Mammary epithelial cell (primary cell): ENCODE measurements at regions of chr3 and their contacts with region 1.

Region 1: DNA sequence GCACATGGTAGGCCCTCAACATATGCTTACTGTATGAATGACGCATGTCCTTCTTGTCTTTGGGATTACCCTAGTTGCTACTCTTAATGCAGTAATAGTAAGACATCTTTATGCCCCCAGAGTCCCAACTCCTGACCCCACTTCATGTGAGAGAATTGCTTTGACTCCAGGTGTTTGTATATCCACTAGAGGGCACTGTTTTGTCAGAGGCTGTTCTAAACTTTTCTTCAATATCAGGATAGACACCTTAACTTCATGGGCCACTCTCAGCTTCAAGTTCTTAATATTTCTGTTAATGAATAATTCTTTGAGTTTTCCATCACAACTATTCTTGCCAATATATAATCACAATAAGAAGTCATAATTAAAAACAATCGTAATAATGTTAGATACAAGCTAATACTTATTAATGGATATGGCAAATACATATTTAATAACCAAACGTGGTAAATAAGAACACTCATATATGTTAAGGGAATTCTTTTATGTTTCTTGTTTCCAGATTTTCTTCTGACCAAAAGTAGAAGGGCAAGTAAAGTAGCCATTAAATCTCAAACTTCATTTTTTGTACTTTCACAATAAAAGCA is 337.2 kb upstream of the DNAJC19 start:
- DNase-seq: peak; percentile 6
- H3K4me3 ChIP-seq: no peak overlapping the region
- H3K27ac ChIP-seq: no peak overlapping the region
- H3K4me1 ChIP-seq: no peaks in the 10 kb centered on the region
- H3K27me3 ChIP-seq: no peaks in the 10 kb centered on the region
- CTCF ChIP-seq: peak; percentile 67 to 80

Region 2: DNA sequence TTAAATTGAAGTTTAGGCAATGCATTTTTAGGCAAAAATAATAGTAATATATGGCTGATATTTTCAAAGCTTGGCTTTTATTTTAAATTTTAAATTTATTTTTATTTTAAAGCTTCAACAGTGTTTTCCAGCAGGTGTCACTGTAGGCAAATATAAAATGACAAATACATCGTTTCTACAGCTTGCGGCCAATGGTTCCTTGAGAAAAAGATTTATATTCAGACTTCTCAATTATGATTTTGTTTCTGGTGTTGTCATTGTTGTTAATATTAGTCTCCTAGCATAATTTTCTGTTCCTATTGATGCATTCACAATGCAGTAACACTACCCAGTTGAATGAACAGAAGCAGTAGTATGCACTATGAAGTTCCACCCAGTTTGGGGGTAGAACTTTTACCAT is 116.5 kb before region 1 on chr3:
- CTCF ChIA-PET with region 1: interaction called, 4 read pairs
- dilution Hi-C with region 1: no loop called
- in situ Hi-C with region 1: no loop called
- intact Hi-C with region 1: loop called (anchors 1 kb)
- DNase-seq: peak; percentile 2
- H3K4me3 ChIP-seq: no peak overlapping the region
- H3K27ac ChIP-seq: no peak overlapping the region
- H3K4me1 ChIP-seq: no peaks in the 10 kb centered on the region
- H3K27me3 ChIP-seq: peaks cover 6% of the 10 kb centered on the region
- CTCF ChIP-seq: peak in 1 of 2 donors; percentile 35

Region 3: DNA sequence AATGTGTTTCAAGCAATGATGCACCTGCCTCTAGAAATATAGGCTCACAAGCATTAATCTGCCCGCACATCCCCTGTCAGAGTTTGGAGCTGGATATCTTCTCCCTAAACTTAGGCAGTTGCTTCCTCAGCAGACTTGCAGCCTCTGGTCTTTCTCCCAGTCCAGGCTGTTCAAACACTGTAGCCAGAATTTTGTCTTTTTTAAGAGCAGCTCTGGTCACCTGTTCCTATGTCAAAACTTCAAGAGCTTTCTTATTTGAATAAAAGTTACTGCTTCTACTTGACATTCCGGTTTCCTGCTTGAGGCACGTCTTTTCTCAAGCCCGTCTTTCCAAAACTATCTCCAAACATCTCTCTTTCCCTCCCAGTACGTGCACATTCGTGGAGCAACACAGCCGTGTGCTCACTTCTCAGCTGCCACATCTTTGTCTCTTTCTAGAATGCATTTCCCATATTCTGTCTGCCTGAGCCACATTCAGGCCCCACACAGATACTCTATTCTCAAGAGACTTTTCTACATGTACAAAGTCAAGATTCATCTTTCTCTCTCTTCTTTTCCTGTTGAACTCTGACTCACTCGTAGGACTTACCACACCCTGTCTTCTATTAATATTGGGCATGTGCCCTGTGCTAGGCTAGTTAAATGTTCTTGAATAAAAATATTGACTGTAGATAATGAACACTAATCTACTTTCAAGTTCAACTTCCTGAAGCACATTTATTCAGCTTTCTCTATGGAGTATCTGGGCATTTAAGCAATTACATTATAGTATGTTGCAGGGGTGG is 77.3 kb after region 1 on chr3:
- CTCF ChIA-PET with region 1: no interaction called
- dilution Hi-C with region 1: no loop called
- in situ Hi-C with region 1: no loop called
- intact Hi-C with region 1: no loop called
- DNase-seq: peak; percentile 26
- H3K4me3 ChIP-seq: no peak overlapping the region
- H3K27ac ChIP-seq: no peak overlapping the region
- H3K4me1 ChIP-seq: peaks cover 5% of the 10 kb centered on the region
- H3K27me3 ChIP-seq: peaks cover 1% of the 10 kb centered on the region
- CTCF ChIP-seq: no peak

Region 4: GRCh38 chr3:181486141-181486885 is 159.6 kb after region 1 on chr3:
- CTCF ChIA-PET with region 1: interaction called, 13 read pairs
- dilution Hi-C with region 1: no loop called
- in situ Hi-C with region 1: no loop called
- intact Hi-C with region 1: no loop called
- DNase-seq: no peak
- H3K4me3 ChIP-seq: no peak overlapping the region
- H3K27ac ChIP-seq: no peak overlapping the region
- H3K4me1 ChIP-seq: no peaks in the 10 kb centered on the region
- H3K27me3 ChIP-seq: peaks cover 5% of the 10 kb centered on the region
- CTCF ChIP-seq: no peak

Region 5: GRCh38 chr3:181567311-181568075 is 240.8 kb after region 1 on chr3:
- CTCF ChIA-PET with region 1: no interaction called
- dilution Hi-C with region 1: no loop called
- in situ Hi-C with region 1: no loop called
- intact Hi-C with region 1: loop called (anchors 10 kb)
- DNase-seq: peak; percentile 93
- H3K4me3 ChIP-seq: peak overlapping the region in 2 of 3 experiments; percentile 8 to 24
- H3K27ac ChIP-seq: peak overlapping the region; percentile 70
- H3K4me1 ChIP-seq: peaks cover 23% of the 10 kb centered on the region
- H3K27me3 ChIP-seq: no peaks in the 10 kb centered on the region
- CTCF ChIP-seq: no peak

Region 6: GRCh38 chr3:181694805-181695660 is 368.3 kb after region 1 on chr3:
- CTCF ChIA-PET with region 1: no interaction called
- dilution Hi-C with region 1: no loop called
- in situ Hi-C with region 1: loop called (anchors 10 to 25 kb)
- intact Hi-C with region 1: no loop called
- DNase-seq: no peak
- H3K4me3 ChIP-seq: peak overlapping the region; percentile 5 to 28 (median 17)
- H3K27ac ChIP-seq: no peak overlapping the region
- H3K4me1 ChIP-seq: peaks cover 17% of the 10 kb centered on the region
- H3K27me3 ChIP-seq: no peaks in the 10 kb centered on the region
- CTCF ChIP-seq: no peak

Region 7: DNA sequence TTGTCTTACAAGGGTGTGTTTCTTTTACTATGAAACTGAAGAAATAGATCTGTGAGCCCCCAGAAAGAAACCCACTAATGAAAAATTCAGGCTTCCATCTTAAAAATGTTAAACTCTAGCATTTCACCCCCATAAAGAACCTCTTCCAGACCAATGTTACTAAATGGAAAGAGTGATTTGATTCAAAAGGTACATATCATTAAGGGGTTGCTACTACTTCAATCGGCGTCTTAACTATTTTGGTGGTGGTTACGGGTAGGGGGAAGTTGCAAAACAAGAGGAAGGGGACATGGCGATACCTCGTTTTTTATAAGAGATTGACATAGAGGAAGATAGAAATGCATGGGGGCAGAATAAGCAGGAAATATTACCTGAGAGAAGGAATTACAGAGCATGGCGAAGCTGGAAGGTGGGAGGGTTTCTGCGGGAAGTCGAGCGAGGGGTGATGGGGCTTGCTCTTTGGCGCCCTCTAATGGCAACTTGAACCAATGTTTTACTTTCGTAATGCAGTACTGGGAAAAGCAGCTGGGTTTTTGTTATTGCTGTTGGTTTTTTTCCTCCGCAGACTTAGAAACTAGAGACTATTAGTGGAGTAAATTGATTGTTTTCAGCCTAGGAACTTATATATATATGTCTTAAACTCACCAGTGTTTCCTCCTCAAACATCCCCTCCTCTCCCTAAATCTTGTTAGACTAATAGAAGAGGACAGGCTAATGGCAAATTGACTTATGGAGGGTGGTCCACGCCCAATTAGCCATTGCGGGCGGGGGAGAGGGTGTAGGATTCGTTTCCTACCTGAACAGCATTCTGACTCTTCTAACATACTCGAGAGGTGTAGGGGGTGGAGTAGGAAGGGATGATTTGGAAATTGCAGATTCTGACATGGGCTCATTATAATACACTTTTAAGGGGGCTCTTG is 373.7 kb after region 1 on chr3:
- CTCF ChIA-PET with region 1: interaction called, 7 read pairs
- dilution Hi-C with region 1: no loop called
- in situ Hi-C with region 1: loop called (anchors 10 to 25 kb)
- intact Hi-C with region 1: loop called (anchors 1 kb)
- DNase-seq: peak; percentile 66
- H3K4me3 ChIP-seq: peak overlapping the region in 2 of 3 experiments; percentile 10 to 34
- H3K27ac ChIP-seq: no peak overlapping the region
- H3K4me1 ChIP-seq: peaks cover 28% of the 10 kb centered on the region
- H3K27me3 ChIP-seq: peaks cover 25% of the 10 kb centered on the region
- CTCF ChIP-seq: peak; percentile 87 to 88